ENCODE measurements at regions of chr20 and their contacts with region 1.

Region 1: GRCh38 chr20:7866285-7866684 is 74.0 kb downstream of the HAO1 start:
- DNase-seq: no peak
- ATAC-seq: no peak
- H3K4me3 ChIP-seq: no peak overlapping the region
- H3K27ac ChIP-seq: no peak overlapping the region
- H3K4me1 ChIP-seq: no peaks in the 10 kb centered on the region
- H3K27me3 ChIP-seq: no peaks in the 10 kb centered on the region
- CTCF ChIP-seq: no peak

Region 2: GRCh38 chr20:6828794-6829423 is 1037.4 kb before region 1 on chr20:
- intact Hi-C with region 1: loop called in 1 of 2 experiments (anchors 10 kb)
- DNase-seq: peak; percentile 50 to 55
- ATAC-seq: peak in 3 of 4 donors; percentile 56 to 72 (median 58)
- H3K4me3 ChIP-seq: no peak overlapping the region
- H3K27ac ChIP-seq: no peak overlapping the region
- H3K4me1 ChIP-seq: no peaks in the 10 kb centered on the region
- H3K27me3 ChIP-seq: no peaks in the 10 kb centered on the region
- CTCF ChIP-seq: peak; percentile 68

Region 3: GRCh38 chr20:8116067-8116811 is 250.0 kb after region 1 on chr20:
- intact Hi-C with region 1: no loop called
- DNase-seq: no peak
- ATAC-seq: no peak
- H3K4me3 ChIP-seq: no peak overlapping the region
- H3K27ac ChIP-seq: no peak overlapping the region
- H3K4me1 ChIP-seq: no peaks in the 10 kb centered on the region
- H3K27me3 ChIP-seq: no peaks in the 10 kb centered on the region
- CTCF ChIP-seq: no peak

Measured in psoas muscle (tissue), 8 donors.